Naive thymus-derived CD4-positive, alpha-beta T cell (primary cell): ENCODE measurements at regions of chr10 and their contacts with region 1.

Region 1: DNA sequence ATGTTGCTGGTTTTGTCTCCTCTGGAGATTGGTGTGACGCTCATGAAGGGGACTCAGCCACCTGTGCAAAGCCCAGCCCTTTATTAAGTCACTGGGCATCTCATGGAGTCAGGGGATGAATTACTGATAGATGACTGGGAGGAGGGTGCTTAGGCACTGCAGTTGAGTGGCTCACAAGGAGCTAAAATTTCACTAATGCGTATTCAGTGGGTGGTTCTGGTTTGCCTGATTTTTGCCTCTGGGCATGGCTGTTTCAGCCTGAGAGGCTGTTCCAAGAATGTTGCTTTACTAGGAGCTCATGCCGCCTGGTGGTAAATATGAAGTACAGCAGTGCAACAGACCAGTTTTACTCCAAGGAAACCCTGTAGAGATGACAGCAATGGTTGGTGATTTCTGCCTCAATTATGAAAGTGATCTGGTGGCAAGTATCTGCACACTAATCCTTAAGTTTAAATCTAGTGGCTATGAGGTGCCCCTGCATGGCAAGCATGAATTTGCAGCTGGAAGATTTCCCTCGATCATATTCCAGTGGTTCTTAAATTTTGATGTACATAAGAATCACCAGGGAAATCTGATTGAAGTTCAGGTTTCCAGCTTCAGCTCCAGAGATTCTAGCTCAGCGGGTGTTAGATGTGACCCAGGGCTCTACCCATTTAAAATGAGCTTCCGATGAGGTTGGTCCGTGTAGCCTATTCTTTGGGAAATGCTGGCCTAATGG is 19.9 kb downstream of the ACTA2 start:
- DNase-seq: peak in 7 of 9 donors; percentile 16 to 63 (median 45)
- ATAC-seq: peak; percentile 78
- H3K4me3 ChIP-seq: no peak overlapping the region
- H3K4me3 Mint-ChIP-seq: no peak overlapping the region
- H3K27ac ChIP-seq: no peak overlapping the region
- H3K27ac Mint-ChIP-seq: peak overlapping the region in 5 of 9 donors; percentile 15 to 70 (median 48)
- H3K4me1 ChIP-seq: peaks cover 5 to 10% of the 10 kb centered on the region in 2 donors
- H3K4me1 Mint-ChIP-seq: peaks cover 5 to 28% (median 18%) of the 10 kb centered on the region in 7 donors
- H3K27me3 ChIP-seq: no peaks in the 10 kb centered on the region
- H3K27me3 Mint-ChIP-seq: no peaks in the 10 kb centered on the region

Region 2: GRCh38 chr10:88759366-88760101 is 173.2 kb before region 1 on chr10 and contains the start of gene LIPN:
- CTCF ChIA-PET with region 1: no interaction called
- POLR2A ChIA-PET with region 1: no interaction called
- intact Hi-C with region 1: no loop called
- DNase-seq: peak in 1 of 9 donors; percentile 6
- ATAC-seq: peak; percentile 91
- H3K4me3 ChIP-seq: no peak within 1 kb of the TSS
- H3K4me3 Mint-ChIP-seq: peak within 1 kb of the TSS in 1 of 10 donors; percentile 39
- H3K27ac ChIP-seq: no peak within 1 kb of the TSS
- H3K27ac Mint-ChIP-seq: peak within 1 kb of the TSS in 2 of 9 donors; percentile 55 to 61
- H3K4me1 ChIP-seq: no peaks in the 10 kb centered on the region
- H3K4me1 Mint-ChIP-seq: peaks cover 5 to 13% (median 11%) of the 10 kb centered on the region in 7 donors
- H3K27me3 ChIP-seq: no peaks in the 10 kb centered on the region
- H3K27me3 Mint-ChIP-seq: peaks cover 0 to 44% (median 0%) of the 10 kb centered on the region in 5 donors
- total RNA-seq, gene LIPN: 0.34 to 5.1 TPM in 2 of 5 experiments, not detected in the others

Region 3: GRCh38 chr10:88810196-88810961 is 122.3 kb before region 1 on chr10:
- CTCF ChIA-PET with region 1: interaction called, 11 read pairs
- POLR2A ChIA-PET with region 1: interaction called, 3 read pairs
- intact Hi-C with region 1: loop called in 1 of 2 experiments (anchors 1 kb)
- DNase-seq: peak in 7 of 9 donors; percentile 15 to 58 (median 48)
- ATAC-seq: peak; percentile 92
- H3K4me3 ChIP-seq: no peak overlapping the region
- H3K4me3 Mint-ChIP-seq: no peak overlapping the region
- H3K27ac ChIP-seq: no peak overlapping the region
- H3K27ac Mint-ChIP-seq: peak overlapping the region in 1 of 9 donors; percentile 35
- H3K4me1 ChIP-seq: peaks cover 0 to 2% of the 10 kb centered on the region in 2 donors
- H3K4me1 Mint-ChIP-seq: peaks cover 13 to 34% (median 23%) of the 10 kb centered on the region in 7 donors
- H3K27me3 ChIP-seq: no peaks in the 10 kb centered on the region
- H3K27me3 Mint-ChIP-seq: peaks cover 0 to 29% (median 0%) of the 10 kb centered on the region in 5 donors

Region 4: DNA sequence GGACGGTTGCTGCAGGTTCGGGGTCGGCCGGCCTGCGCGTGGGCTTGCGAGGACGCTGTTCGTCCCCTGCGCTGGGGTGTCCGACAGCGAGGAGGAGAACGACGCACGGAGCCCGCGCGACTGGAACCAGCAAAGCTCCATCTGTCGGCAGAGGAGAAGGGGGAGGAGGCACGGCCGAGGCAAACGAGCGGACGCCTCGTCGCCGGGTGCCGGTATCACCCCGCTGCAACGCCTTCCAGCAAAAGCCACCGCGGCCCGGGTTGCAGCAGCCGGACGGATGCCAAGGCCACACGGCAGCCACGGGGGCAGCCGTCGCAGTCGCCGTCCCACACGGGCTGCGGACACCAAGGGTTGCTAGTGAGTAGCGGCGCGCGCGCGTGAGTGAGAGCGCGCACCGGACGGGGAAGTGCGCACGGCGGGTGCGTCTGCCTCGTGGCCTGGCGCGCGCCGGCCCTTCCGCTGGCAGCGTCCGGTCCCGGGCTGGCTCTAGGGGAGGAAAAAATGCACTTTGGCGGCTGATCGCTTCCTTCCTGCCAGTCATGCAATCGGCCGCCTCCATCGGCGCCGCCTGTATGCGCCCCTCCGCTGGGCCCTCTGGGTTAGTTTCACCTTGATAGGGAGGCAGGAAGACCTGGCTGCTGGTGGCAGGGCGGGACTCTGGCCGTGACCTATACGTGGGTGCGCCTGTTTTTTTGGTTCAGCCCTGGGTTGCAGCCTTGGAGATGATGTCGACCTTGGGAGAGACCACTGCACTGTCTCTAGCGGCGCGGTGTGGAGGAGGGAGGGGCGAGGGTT is 52.2 kb before region 1 on chr10:
- CTCF ChIA-PET with region 1: interaction called, 10 read pairs
- POLR2A ChIA-PET with region 1: interaction called, 3 read pairs
- intact Hi-C with region 1: loop called (anchors 1 to 2 kb)
- DNase-seq: peak; percentile 58 to 79 (median 75)
- ATAC-seq: peak; percentile 84
- H3K4me3 ChIP-seq: peak overlapping the region; percentile 85
- H3K4me3 Mint-ChIP-seq: peak overlapping the region; percentile 95 to 100 (median 98)
- H3K27ac ChIP-seq: peak overlapping the region; percentile 74
- H3K27ac Mint-ChIP-seq: peak overlapping the region; percentile 82 to 97 (median 95)
- H3K4me1 ChIP-seq: peaks cover 43 to 44% of the 10 kb centered on the region in 2 donors
- H3K4me1 Mint-ChIP-seq: peaks cover 43 to 79% (median 69%) of the 10 kb centered on the region in 7 donors
- H3K27me3 ChIP-seq: no peaks in the 10 kb centered on the region
- H3K27me3 Mint-ChIP-seq: no peaks in the 10 kb centered on the region

Region 5: DNA sequence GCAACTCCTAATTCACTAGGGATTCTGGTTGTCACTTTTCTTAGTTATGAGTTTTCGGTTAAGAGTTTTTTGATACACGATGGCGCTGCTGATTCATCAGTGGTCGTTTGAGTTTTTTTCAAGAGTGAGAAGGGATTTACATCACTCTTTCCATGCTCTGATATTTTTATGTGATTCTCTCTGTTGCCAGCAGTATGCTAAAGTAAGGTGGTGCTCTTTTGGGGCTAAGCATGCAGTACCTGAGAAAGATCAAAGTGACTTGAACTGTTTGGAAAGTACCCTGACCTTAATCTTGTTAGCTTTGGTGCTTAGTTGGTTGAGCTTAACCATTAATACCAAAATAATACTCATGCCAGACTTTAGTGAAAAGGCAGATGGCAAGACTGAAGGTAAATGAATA is 24.5 kb before region 1 on chr10:
- CTCF ChIA-PET with region 1: no interaction called
- POLR2A ChIA-PET with region 1: no interaction called
- intact Hi-C with region 1: no loop called
- DNase-seq: no peak
- ATAC-seq: peak; percentile 52
- H3K4me3 ChIP-seq: no peak overlapping the region
- H3K4me3 Mint-ChIP-seq: no peak overlapping the region
- H3K27ac ChIP-seq: no peak overlapping the region
- H3K27ac Mint-ChIP-seq: peak overlapping the region in 1 of 9 donors; percentile 3
- H3K4me1 ChIP-seq: no peaks in the 10 kb centered on the region
- H3K4me1 Mint-ChIP-seq: peaks cover 0 to 14% (median 0%) of the 10 kb centered on the region in 7 donors
- H3K27me3 ChIP-seq: no peaks in the 10 kb centered on the region
- H3K27me3 Mint-ChIP-seq: no peaks in the 10 kb centered on the region

Region 6: GRCh38 chr10:88979153-88979562 is 46.5 kb after region 1 on chr10:
- CTCF ChIA-PET with region 1: interaction called, 4 read pairs
- POLR2A ChIA-PET with region 1: no interaction called
- intact Hi-C with region 1: loop called in 1 of 2 experiments (anchors 1 kb)
- DNase-seq: no peak
- ATAC-seq: no peak
- H3K4me3 ChIP-seq: no peak overlapping the region
- H3K4me3 Mint-ChIP-seq: no peak overlapping the region
- H3K27ac ChIP-seq: no peak overlapping the region
- H3K27ac Mint-ChIP-seq: peak overlapping the region in 2 of 9 donors; percentile 32 to 33
- H3K4me1 ChIP-seq: peaks cover 7 to 12% of the 10 kb centered on the region in 2 donors
- H3K4me1 Mint-ChIP-seq: peaks cover 6 to 29% (median 18%) of the 10 kb centered on the region in 7 donors
- H3K27me3 ChIP-seq: no peaks in the 10 kb centered on the region
- H3K27me3 Mint-ChIP-seq: peaks cover 0 to 3% (median 0%) of the 10 kb centered on the region in 5 donors

Region 7: GRCh38 chr10:89029785-89030437 is 97.2 kb after region 1 on chr10:
- CTCF ChIA-PET with region 1: interaction called, 11 read pairs
- POLR2A ChIA-PET with region 1: no interaction called
- intact Hi-C with region 1: loop called (anchors 1 kb)
- DNase-seq: peak; percentile 37 to 68 (median 53)
- ATAC-seq: peak; percentile 85
- H3K4me3 ChIP-seq: no peak overlapping the region
- H3K4me3 Mint-ChIP-seq: peak overlapping the region in 1 of 10 donors; percentile 30
- H3K27ac ChIP-seq: no peak overlapping the region
- H3K27ac Mint-ChIP-seq: no peak overlapping the region
- H3K4me1 ChIP-seq: no peaks in the 10 kb centered on the region
- H3K4me1 Mint-ChIP-seq: peaks cover 0 to 31% (median 0%) of the 10 kb centered on the region in 7 donors
- H3K27me3 ChIP-seq: no peaks in the 10 kb centered on the region
- H3K27me3 Mint-ChIP-seq: no peaks in the 10 kb centered on the region

Region 8: DNA sequence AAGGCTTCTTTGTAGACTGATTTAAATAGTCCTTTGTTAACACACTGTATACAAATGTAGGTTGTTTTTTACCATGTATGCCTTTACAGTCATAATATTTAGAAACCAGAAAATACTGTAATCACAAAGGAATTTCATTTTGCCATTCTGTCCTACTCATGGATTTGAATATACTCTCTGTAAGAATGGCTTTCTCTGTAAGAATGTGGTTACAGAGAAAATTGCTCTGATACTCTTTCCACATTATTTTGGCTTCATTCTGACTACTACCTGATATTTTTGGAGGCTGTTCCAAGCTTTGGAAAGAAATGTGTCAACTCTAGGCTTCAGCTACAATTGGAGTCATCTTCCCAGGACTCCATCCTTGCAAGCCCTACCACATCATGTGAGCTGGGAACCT is 250.9 kb after region 1 on chr10:
- CTCF ChIA-PET with region 1: no interaction called
- POLR2A ChIA-PET with region 1: no interaction called
- intact Hi-C with region 1: no loop called
- DNase-seq: no peak
- ATAC-seq: no peak
- H3K4me3 ChIP-seq: no peak overlapping the region
- H3K4me3 Mint-ChIP-seq: no peak overlapping the region
- H3K27ac ChIP-seq: no peak overlapping the region
- H3K27ac Mint-ChIP-seq: no peak overlapping the region
- H3K4me1 ChIP-seq: no peaks in the 10 kb centered on the region
- H3K4me1 Mint-ChIP-seq: no peaks in the 10 kb centered on the region
- H3K27me3 ChIP-seq: no peaks in the 10 kb centered on the region
- H3K27me3 Mint-ChIP-seq: peaks cover 0 to 37% (median 9%) of the 10 kb centered on the region in 5 donors

Region 9: GRCh38 chr10:89553064-89553734 is 620.5 kb after region 1 on chr10:
- CTCF ChIA-PET with region 1: no interaction called
- POLR2A ChIA-PET with region 1: no interaction called
- intact Hi-C with region 1: no loop called
- DNase-seq: no peak
- ATAC-seq: no peak
- H3K4me3 ChIP-seq: no peak overlapping the region
- H3K4me3 Mint-ChIP-seq: no peak overlapping the region
- H3K27ac ChIP-seq: no peak overlapping the region
- H3K27ac Mint-ChIP-seq: no peak overlapping the region
- H3K4me1 ChIP-seq: no peaks in the 10 kb centered on the region
- H3K4me1 Mint-ChIP-seq: no peaks in the 10 kb centered on the region
- H3K27me3 ChIP-seq: no peaks in the 10 kb centered on the region
- H3K27me3 Mint-ChIP-seq: peaks cover 4 to 15% (median 7%) of the 10 kb centered on the region in 5 donors